Panc1 (cell line): ENCODE measurements at regions of chr17 and their contacts with region 1.

Region 1: GRCh38 chr17:1894753-1895339 is 65.0 kb downstream of the RPA1 start:
- DNase-seq: no peak
- ATAC-seq: no peak
- H3K4me3 ChIP-seq: no peak overlapping the region
- H3K27ac ChIP-seq: no peak overlapping the region
- H3K4me1 ChIP-seq: no peaks in the 10 kb centered on the region
- H3K27me3 ChIP-seq: no peaks in the 10 kb centered on the region
- CTCF ChIP-seq: no peak

Region 2: GRCh38 chr17:1870592-1870991 is 24.3 kb before region 1 on chr17:
- CTCF ChIA-PET with region 1: no interaction called
- POLR2A ChIA-PET with region 1: no interaction called
- in situ Hi-C with region 1: no loop called
- intact Hi-C with region 1: no loop called
- DNase-seq: no peak
- ATAC-seq: no peak
- H3K4me3 ChIP-seq: no peak overlapping the region
- H3K27ac ChIP-seq: no peak overlapping the region
- H3K4me1 ChIP-seq: no peaks in the 10 kb centered on the region
- H3K27me3 ChIP-seq: no peaks in the 10 kb centered on the region
- CTCF ChIP-seq: no peak

Region 3: DNA sequence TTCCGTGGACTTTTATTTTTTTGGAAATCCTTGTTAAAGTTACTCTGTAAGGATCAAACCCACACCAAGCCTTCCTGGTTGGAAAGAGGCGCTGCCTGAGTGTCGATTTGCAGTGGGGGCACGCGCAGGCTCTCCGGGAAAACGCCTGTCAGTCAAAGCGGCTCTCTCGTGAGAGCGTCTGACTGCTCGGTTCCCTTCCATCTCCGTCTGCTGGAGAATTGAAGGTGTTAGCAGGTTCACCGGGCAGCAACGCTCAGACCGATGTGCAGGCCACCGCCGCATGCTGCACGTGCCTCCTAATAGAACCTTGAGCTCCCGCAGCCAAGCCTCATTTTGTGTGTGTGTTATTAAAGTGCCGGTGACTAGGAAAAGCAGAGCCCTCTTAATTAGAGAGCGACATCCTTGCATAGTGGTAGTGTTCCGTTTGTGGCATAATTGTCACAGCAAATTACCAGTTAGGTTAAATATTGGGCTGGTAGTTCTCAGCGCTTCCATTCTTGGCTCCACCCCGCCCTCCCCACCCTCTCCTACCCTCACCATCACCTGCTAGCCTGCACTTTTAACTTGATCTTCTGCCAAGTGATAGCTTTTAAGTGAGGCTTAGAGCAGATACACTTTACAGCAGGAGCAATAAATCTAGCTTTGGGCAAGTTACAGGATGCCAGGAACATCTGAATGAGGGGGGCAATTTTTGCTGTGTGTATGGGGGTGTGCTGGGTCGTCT is 10.5 kb after region 1 on chr17:
- CTCF ChIA-PET with region 1: no interaction called
- POLR2A ChIA-PET with region 1: no interaction called
- in situ Hi-C with region 1: no loop called
- intact Hi-C with region 1: no loop called
- DNase-seq: no peak
- ATAC-seq: no peak
- H3K4me3 ChIP-seq: no peak overlapping the region
- H3K27ac ChIP-seq: no peak overlapping the region
- H3K4me1 ChIP-seq: no peaks in the 10 kb centered on the region; the same call in 1 of the 2 replicates
- H3K27me3 ChIP-seq: 0 out of 2 replicates have a peak, but pooled peaks cover 2% of the 10 kb centered on the region
- CTCF ChIP-seq: no peak

Region 4: GRCh38 chr17:1958134-1958881 is 63.5 kb after region 1 on chr17:
- CTCF ChIA-PET with region 1: no interaction called
- POLR2A ChIA-PET with region 1: no interaction called
- in situ Hi-C with region 1: no loop called
- intact Hi-C with region 1: no loop called
- DNase-seq: no peak
- ATAC-seq: no peak
- H3K4me3 ChIP-seq: no peak overlapping the region
- H3K27ac ChIP-seq: no peak overlapping the region
- H3K4me1 ChIP-seq: no peaks in the 10 kb centered on the region
- H3K27me3 ChIP-seq: no peaks in the 10 kb centered on the region
- CTCF ChIP-seq: no peak

Region 5: DNA sequence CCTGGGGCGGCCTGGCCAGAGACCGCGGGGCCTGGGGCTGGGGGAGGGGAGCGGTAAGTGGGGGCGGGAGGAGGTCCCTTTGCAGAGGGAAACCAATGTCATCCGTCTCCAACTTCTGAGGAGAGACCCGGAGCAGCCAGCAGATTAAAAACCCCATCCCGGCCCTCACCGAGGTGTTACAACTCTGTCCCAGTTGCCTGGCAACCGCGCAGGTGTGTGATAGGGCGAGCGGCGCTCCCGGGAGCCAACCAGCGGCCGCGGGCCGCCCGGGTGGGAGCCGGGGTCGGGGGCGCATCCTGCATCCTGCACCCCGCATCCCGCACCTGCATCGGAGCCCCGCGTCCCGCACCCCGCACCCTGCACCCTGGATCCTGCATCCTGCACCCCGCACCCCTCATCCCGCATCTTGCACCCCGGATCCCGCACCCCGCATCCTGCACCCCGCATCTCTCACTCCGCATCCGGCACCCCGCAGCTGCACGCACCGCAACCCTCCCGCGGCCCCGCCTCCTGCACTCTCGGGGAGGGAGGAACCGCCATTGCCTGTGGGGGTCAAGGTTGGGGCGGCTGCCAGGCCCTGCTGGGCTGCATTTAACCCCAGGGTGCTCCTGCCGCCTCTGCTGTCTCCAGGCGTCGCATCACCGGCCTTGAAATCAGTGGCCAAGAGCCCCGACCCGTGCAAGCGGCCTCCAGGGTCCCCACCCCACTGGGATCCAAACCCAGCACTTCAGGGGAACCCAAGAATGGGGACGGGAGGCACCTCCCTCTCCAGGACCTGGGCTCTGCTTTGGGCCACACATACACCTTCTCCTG is 82.9 kb after region 1 on chr17:
- CTCF ChIA-PET with region 1: interaction called, 11 read pairs
- POLR2A ChIA-PET with region 1: no interaction called
- in situ Hi-C with region 1: no loop called
- intact Hi-C with region 1: no loop called
- DNase-seq: no peak
- ATAC-seq: no peak
- H3K4me3 ChIP-seq: no peak overlapping the region
- H3K27ac ChIP-seq: no peak overlapping the region
- H3K4me1 ChIP-seq: no peaks in the 10 kb centered on the region
- H3K27me3 ChIP-seq: no peaks in the 10 kb centered on the region
- CTCF ChIP-seq: no peak